Activated CD4-positive, alpha-beta T cell treated with anti-CD3 and anti-CD28 coated beads, Interleukin-2, amount 10 ng/mL, durations not matched to agents 7 days and 5 days (primary cell): ENCODE measurements at regions of chr6 and their contacts with region 1.

Region 1: GRCh38 chr6:2999618-3000557 is at the start of gene NQO2:
- DNase-seq: peak; percentile 90
- H3K4me3 Mint-ChIP-seq: peak within 1 kb of the TSS; percentile 82
- H3K27ac Mint-ChIP-seq: peak within 1 kb of the TSS; percentile 83
- H3K4me1 Mint-ChIP-seq: peaks cover 43% of the 10 kb centered on the region
- H3K27me3 Mint-ChIP-seq: no peaks in the 10 kb centered on the region
- total RNA-seq, gene NQO2: 37.5 to 43.2 TPM

Region 2: DNA sequence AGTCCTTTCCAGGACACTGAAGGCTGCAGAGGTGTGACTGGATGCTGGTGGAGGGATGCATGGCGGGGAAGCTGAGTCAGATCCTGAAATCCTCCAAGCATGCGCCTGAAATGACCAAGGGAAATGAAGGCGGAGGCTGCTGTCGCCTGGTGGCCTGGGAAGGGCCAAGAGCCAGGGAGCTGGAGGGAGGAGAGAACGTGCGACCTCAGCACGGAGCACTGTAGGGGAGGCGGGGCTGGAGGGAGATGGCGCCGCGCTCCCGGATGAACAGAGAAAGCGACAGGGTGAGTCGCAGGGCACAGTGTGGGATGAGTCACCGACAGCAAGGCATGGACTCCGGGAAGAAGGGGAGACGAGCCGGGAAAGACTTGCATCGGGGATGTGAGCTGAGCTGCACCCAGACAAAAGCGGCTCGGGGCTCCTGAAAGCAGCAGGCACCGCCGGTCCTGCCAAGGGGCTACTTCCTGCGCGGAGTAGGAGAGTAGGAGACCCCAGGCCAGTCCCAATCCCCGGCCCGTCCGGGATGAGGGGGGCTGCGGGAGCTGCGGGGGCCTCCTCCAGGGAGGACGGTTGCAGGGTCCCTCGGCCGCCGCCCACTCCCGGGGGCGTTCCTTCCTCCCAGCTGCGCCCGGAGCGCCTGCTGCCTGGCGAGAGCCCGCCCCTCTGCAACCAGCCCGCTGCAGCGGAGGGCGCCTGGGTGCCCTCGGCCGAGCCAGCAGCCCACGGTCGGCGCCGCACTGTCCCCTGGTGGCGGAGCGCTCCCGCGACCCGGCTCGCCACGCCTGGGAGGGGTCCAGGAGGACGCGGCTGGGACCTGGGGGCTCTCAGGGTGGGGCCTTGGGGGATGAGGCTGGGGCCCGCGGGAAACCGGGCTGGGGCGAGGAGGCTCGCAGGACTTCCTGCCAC is 11.2 kb before region 1 on chr6:
- CTCF ChIA-PET with region 1: interaction called, 35 read pairs
- POLR2A ChIA-PET with region 1: no interaction called
- DNase-seq: peak; percentile 76
- H3K4me3 Mint-ChIP-seq: peak overlapping the region; percentile 87
- H3K27ac Mint-ChIP-seq: peak overlapping the region; percentile 98
- H3K4me1 Mint-ChIP-seq: peaks cover 27% of the 10 kb centered on the region
- H3K27me3 Mint-ChIP-seq: peaks cover 3% of the 10 kb centered on the region

Region 3: DNA sequence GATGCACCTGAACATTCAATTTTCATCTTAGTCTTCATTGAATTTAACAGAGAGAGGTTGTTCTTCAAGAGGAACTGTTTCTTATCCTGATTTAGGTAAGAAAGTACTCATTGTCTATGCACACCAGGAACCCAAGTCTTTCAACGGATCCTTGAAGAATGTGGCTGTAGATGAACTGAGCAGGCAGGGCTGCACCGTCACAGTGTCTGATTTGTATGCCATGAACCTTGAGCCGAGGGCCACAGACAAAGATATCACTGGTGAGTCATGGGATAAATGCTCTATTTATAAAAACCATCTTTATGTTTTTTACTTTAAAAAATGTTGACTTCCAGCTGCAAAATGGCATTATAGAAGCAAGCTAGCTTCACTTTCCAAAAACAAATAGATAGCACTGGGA is 10.0 kb after region 1 on chr6:
- CTCF ChIA-PET with region 1: interaction called, 20 read pairs
- POLR2A ChIA-PET with region 1: interaction called, 5 read pairs
- DNase-seq: no peak
- H3K4me3 Mint-ChIP-seq: no peak overlapping the region
- H3K27ac Mint-ChIP-seq: no peak overlapping the region
- H3K4me1 Mint-ChIP-seq: peaks cover 13% of the 10 kb centered on the region
- H3K27me3 Mint-ChIP-seq: no peaks in the 10 kb centered on the region

Region 4: DNA sequence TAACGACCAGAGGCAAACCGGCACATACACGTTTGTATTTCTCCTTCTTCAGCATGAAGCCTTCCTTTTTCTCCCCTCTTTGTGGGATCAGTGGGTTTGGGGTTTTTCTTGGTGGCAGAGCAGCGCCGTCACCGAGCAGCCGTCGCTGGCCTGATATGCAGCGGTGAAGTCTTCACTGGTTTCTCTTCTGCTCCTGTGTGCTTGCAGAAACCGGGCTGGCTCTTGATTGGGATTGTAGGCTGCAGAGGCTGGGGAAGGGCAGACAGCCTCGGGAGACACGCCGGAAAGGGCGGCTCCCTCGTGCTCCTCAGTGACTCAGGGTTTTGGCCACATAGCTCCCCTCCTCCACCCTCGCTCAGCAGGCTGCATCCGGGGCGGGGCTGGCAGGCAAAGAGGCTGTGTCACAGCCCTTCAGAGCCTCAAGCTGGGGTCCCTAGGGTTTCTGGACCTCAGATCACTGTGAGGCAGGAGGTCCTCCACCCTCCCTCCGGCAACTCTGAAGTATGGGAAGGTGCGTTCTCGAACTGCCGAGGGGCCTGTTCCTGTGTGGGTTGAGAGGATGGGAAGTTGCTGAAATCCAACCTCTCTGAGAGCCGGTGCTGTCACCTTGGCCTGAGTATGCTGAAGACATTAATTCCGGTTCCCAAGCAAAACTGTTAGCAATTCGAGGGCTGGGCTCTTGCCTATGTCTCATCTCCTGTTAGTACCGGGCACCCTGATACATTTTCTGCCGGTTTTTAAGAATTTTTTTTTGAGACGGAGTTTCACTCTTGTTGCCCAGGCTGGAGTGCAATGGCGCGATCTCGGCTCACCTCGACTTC is 24.0 kb after region 1 on chr6:
- CTCF ChIA-PET with region 1: interaction called, 21 read pairs
- POLR2A ChIA-PET with region 1: interaction called, 3 read pairs
- DNase-seq: peak; percentile 90
- H3K4me3 Mint-ChIP-seq: peak overlapping the region; percentile 73
- H3K27ac Mint-ChIP-seq: peak overlapping the region; percentile 97
- H3K4me1 Mint-ChIP-seq: peaks cover 59% of the 10 kb centered on the region
- H3K27me3 Mint-ChIP-seq: no peaks in the 10 kb centered on the region

Region 5: DNA sequence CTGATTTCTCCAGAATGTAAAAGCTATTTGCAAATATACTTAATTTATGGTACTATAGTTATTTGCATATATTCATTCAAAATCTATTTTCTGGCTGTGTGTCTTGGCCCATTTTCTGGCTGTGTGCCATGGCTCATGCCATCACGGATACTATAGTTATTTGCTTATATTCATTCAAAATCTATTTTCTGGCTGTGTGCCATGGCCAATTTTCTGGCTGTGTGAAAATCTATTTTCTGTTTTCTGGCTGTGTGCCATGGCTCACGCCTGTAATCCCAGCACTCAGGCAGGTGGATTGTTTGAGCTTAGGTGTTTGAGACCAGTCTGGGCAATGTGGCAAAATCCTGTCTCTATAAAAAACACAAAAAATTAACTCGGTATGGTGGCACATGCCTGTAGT is 39.5 kb after region 1 on chr6:
- CTCF ChIA-PET with region 1: interaction called, 11 read pairs
- POLR2A ChIA-PET with region 1: no interaction called
- DNase-seq: no peak
- H3K4me3 Mint-ChIP-seq: no peak overlapping the region
- H3K27ac Mint-ChIP-seq: no peak overlapping the region
- H3K4me1 Mint-ChIP-seq: no peaks in the 10 kb centered on the region
- H3K27me3 Mint-ChIP-seq: peaks cover 11% of the 10 kb centered on the region

Region 6: GRCh38 chr6:3053231-3053508 is 53.3 kb after region 1 on chr6:
- CTCF ChIA-PET with region 1: interaction called, 13 read pairs
- POLR2A ChIA-PET with region 1: interaction called, 3 read pairs
- DNase-seq: no peak
- H3K4me3 Mint-ChIP-seq: peak overlapping the region; percentile 63
- H3K27ac Mint-ChIP-seq: peak overlapping the region; percentile 79
- H3K4me1 Mint-ChIP-seq: peaks cover 30% of the 10 kb centered on the region
- H3K27me3 Mint-ChIP-seq: peaks cover 5% of the 10 kb centered on the region

Region 7: GRCh38 chr6:3068329-3069214 is 68.7 kb after region 1 on chr6 and contains the start of gene RIPK1:
- CTCF ChIA-PET with region 1: interaction called, 12 read pairs
- POLR2A ChIA-PET with region 1: interaction called, 4 read pairs
- DNase-seq: peak; percentile 94
- H3K4me3 Mint-ChIP-seq: peak within 1 kb of the TSS; percentile 98
- H3K27ac Mint-ChIP-seq: peak within 1 kb of the TSS; percentile 99
- H3K4me1 Mint-ChIP-seq: peaks cover 70% of the 10 kb centered on the region
- H3K27me3 Mint-ChIP-seq: no peaks in the 10 kb centered on the region
- total RNA-seq, gene RIPK1: 35.8 to 38.9 TPM